ENCODE measurements at regions of chr1 and their contacts with region 1.

Region 1: DNA sequence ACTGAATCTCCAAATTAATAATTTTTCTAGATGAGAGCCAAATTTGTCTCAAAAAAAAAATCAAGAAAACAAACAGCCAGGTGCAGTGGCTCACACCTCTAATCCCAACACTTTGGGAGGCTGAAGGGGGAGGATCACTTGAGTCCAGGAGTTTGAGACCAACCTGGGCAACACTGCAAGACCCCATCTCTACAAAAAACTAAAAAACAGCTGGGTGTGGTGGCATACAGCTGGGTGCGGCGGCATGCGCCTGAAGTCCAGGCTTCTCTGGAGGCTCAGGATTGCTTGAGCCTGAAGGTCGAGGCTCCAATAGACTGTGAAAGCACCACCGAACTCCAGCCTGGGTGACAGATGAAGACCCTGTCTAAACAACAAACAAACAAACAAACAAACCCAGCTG is 14.0 kb downstream of the ACBD3 start:
- DNase-seq: no peak
- ATAC-seq: no peak
- H3K4me3 ChIP-seq: no peak overlapping the region
- H3K4me3 Mint-ChIP-seq: no peak overlapping the region
- H3K27ac ChIP-seq: no peak overlapping the region
- H3K27ac Mint-ChIP-seq: no peak overlapping the region
- H3K4me1 ChIP-seq: peaks cover 12% of the 10 kb centered on the region
- H3K4me1 Mint-ChIP-seq: peaks cover 29% of the 10 kb centered on the region
- H3K27me3 ChIP-seq: no peaks in the 10 kb centered on the region
- H3K27me3 Mint-ChIP-seq: no peaks in the 10 kb centered on the region
- CTCF ChIP-seq: no peak

Region 2: DNA sequence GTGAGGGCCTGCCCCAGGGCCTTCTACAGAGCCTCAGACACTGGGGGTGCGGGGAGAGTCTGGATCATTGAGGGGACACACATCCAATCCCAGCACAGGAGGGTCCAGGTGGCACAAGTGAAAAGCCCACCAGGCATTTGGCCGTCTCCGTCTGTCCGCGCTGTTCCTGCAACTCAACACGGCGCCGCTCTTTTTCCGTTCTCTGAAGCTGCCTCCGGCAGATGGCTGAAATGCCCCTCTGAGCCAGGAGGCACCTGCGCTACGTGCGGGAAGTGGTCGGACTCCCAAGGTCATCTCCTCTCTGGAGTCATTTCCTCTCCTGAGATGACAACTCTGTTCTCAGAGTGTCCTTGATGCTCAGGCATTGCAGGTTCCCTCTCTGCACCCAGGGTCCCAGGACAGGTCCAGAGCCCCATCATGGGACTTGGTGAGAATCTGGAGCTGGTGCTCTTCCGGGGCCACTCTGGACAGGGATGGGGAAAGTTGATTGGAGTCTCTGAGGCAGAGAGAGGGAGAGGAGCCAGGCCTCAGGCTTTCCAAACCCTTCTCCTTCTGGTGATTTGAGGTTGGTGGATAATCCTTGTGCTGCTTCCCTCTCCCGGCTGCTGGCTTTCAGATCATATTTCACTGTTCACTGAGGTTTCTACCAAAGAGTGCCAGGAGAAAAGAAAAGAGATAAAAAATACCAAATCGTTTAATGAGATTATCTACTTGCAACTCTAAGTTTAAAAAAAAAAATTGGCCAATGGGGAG is 36.9 kb after region 1 on chr1:
- CTCF ChIA-PET with region 1: no interaction called
- POLR2A ChIA-PET with region 1: no interaction called
- intact Hi-C with region 1: loop called in 1 of 2 experiments (anchors 5 kb)
- DNase-seq: no peak
- ATAC-seq: no peak
- H3K4me3 ChIP-seq: no peak overlapping the region
- H3K4me3 Mint-ChIP-seq: no peak overlapping the region
- H3K27ac ChIP-seq: no peak overlapping the region
- H3K27ac Mint-ChIP-seq: no peak overlapping the region
- H3K4me1 ChIP-seq: no peaks in the 10 kb centered on the region
- H3K4me1 Mint-ChIP-seq: no peaks in the 10 kb centered on the region
- H3K27me3 ChIP-seq: no peaks in the 10 kb centered on the region
- H3K27me3 Mint-ChIP-seq: no peaks in the 10 kb centered on the region
- CTCF ChIP-seq: no peak

Region 3: DNA sequence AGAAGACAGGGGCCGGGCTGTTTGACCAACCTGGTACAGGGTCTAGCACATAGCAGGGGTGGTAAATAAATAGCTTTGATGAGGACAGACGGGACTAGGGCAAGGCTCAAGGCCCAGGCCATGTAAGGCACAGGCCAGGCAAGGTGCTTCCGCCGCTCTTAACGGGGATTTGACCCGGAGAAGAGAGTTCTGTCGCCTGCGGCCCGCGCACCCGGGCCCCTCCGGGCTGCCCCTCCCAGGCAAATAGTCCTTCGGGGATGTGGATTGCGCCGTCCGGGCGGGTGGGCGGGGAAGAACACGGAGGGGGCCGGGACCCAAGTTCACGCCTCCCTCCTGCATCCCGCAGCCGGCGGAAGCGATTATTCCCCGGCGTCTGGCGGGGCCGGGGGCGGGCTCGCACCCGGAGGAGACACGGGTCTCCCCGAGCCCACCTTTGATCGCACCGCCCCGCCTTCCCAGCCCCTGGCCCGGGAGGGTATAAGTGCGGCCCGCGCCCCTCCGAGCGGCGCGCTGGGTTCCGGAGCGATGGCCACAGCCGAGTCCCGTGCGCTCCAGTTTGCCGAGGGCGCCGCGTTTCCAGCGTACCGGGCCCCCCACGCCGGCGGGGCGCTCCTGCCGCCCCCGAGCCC is 50.7 kb after region 1 on chr1 and contains the start of gene MIXL1:
- CTCF ChIA-PET with region 1: no interaction called
- POLR2A ChIA-PET with region 1: no interaction called
- intact Hi-C with region 1: no loop called
- DNase-seq: no peak
- ATAC-seq: peak; percentile 21
- H3K4me3 ChIP-seq: peak within 1 kb of the TSS; percentile 38
- H3K4me3 Mint-ChIP-seq: peak within 1 kb of the TSS; percentile 82
- H3K27ac ChIP-seq: no peak within 1 kb of the TSS
- H3K27ac Mint-ChIP-seq: no peak within 1 kb of the TSS
- H3K4me1 ChIP-seq: peaks cover 11% of the 10 kb centered on the region
- H3K4me1 Mint-ChIP-seq: no peaks in the 10 kb centered on the region
- H3K27me3 ChIP-seq: peaks cover 22 to 29% of the 10 kb centered on the region in 2 experiments
- H3K27me3 Mint-ChIP-seq: peaks cover 52% of the 10 kb centered on the region
- CTCF ChIP-seq: no peak
- total RNA-seq, gene MIXL1: not detected

Measured in CD4-positive, alpha-beta T cell (primary cell).